Heart right ventricle (tissue), 16 donors: ENCODE measurements at regions of chr7 and their contacts with region 1.

Region 1: GRCh38 chr7:112398534-112398933 is 51.7 kb upstream of the IFRD1 start:
- DNase-seq: no peak
- ATAC-seq: no peak
- H3K4me3 ChIP-seq: no peak overlapping the region
- H3K27ac ChIP-seq: no peak overlapping the region
- H3K4me1 ChIP-seq: no peaks in the 10 kb centered on the region
- H3K27me3 ChIP-seq: peaks cover 0 to 9% (median 0%) of the 10 kb centered on the region in 7 donors
- CTCF ChIP-seq: no peak

Region 2: GRCh38 chr7:111919631-111920179 is 478.8 kb before region 1 on chr7:
- intact Hi-C with region 1: loop called in 1 of 10 experiments (anchors 10 kb)
- DNase-seq: no peak
- ATAC-seq: no peak
- H3K4me3 ChIP-seq: no peak overlapping the region
- H3K27ac ChIP-seq: no peak overlapping the region
- H3K4me1 ChIP-seq: no peaks in the 10 kb centered on the region
- H3K27me3 ChIP-seq: no peaks in the 10 kb centered on the region
- CTCF ChIP-seq: no peak

Region 3: GRCh38 chr7:111953611-111954010 is 444.9 kb before region 1 on chr7:
- intact Hi-C with region 1: loop called in 1 of 10 experiments (anchors 10 kb)
- DNase-seq: peak in 1 of 2 donors; percentile 26
- ATAC-seq: peak; percentile 60 to 85 (median 75)
- H3K4me3 ChIP-seq: no peak overlapping the region
- H3K27ac ChIP-seq: peak overlapping the region in 4 of 10 donors; percentile 18 to 61 (median 55)
- H3K4me1 ChIP-seq: peaks cover 5 to 48% (median 29%) of the 10 kb centered on the region in 9 donors
- H3K27me3 ChIP-seq: no peaks in the 10 kb centered on the region
- CTCF ChIP-seq: peak in 6 of 9 donors; percentile 14 to 56 (median 38)